Activated CD8-positive, alpha-beta T cell treated with anti-CD3 and anti-CD28 coated beads, Interleukin-2, amount 10 ng/mL, durations not matched to agents 7 days and 5 days (primary cell): ENCODE measurements at regions of chr15 and their contacts with region 1.

Region 1: DNA sequence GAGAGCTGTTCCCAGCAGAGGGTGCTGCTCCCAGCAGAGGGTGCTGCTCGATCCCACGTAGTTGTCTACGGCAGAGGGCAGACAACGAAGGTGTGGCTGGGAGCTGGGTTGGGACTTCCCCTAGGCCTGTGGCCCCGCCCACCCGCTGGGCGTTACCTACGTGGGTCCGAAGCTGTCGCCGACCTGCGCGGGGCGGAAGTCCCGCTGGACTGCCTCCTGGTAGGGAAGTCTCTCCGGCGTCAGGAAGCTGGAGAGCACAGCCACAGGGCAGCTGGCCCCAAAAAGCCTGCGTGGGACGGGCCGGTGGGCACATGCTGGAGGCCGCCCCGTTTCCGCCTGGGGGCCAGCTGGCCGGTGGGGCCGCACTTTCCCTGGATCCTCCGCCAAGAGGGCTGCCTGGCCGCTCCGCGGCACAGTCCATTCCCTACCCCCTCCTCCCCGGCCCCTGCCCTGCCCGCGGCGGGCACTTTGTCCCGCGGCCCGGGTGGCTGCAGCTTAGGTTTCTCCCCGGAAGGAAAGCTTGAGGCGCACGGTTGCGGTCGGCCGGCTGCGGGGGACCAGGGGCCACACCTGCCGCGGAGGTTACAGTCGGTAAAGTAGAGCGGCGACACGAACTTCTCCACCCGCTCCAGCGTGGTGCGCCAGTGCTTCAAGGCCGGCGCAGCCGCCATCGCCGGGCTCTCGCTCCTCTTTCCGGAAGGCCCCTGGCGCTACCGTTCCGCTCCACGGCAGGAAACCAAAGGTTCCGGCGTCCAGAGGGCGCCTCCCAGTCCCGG is at the start of gene MAN2C1:
- DNase-seq: peak; percentile 94
- ATAC-seq: peak; percentile 94
- H3K4me3 Mint-ChIP-seq: peak within 1 kb of the TSS; percentile 89
- H3K27ac Mint-ChIP-seq: peak within 1 kb of the TSS; percentile 94
- H3K4me1 Mint-ChIP-seq: peaks cover 29% of the 10 kb centered on the region
- H3K27me3 Mint-ChIP-seq: no peaks in the 10 kb centered on the region
- total RNA-seq, gene MAN2C1: 123 to 131 TPM

Region 2: DNA sequence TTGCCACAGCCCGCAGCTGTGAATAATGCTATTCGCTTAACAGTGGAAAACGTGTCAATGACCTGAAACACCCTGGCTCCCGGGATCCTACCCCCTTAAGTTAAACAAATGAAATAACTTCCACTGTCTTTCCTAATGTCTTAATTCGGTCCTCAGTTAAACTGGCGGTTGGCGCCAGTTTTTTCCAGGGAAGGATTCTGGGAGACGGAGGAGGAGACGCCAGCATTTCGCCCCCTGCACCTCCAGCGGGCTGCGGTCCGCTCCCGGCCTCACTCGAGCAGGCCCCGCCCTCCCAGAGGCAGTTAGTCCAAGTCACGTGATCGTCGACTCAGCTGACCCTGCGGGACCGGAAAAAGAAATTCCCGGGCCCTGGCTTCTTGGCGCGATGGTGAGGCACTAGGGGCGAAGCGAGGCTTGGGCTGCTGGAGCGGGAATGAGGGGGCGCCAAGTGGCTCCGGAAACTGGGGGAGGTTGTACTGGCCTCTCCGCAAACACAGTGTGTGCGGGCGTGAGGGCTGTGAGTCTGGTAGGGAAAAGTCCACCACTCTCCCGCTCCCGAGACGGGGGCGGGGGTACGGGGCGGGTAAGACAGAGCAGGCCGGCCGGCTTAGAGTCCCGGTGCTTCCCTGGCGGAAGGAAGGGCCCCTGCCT is 32.3 kb before region 1 on chr15 and contains the start of gene COMMD4:
- CTCF ChIA-PET with region 1: interaction called, 4 read pairs
- POLR2A ChIA-PET with region 1: interaction called, 12 read pairs
- DNase-seq: peak; percentile 91
- ATAC-seq: peak; percentile 89
- H3K4me3 Mint-ChIP-seq: peak within 1 kb of the TSS; percentile 96
- H3K27ac Mint-ChIP-seq: peak within 1 kb of the TSS; percentile 94
- H3K4me1 Mint-ChIP-seq: peaks cover 16% of the 10 kb centered on the region
- H3K27me3 Mint-ChIP-seq: peaks cover 3% of the 10 kb centered on the region
- total RNA-seq, gene COMMD4: 101 to 103 TPM

Region 3: DNA sequence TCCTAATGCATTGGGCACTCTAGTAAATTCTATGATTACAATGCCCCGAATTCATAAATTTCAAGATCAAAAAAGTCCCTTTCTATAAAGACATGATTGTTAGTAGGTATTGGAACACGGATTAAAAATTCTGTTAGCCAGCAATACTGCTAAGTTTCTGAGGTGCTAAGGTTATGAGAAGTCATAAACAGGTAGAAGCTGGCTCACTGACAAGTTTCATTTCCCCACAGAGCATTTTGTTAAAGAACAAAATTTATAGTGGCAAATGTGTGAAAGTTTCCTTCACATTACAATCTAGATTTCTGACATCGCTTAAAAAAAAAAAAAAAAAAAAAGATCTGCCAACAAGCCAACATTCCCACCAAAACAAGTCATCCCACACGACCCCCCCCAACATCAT is 12.7 kb after region 1 on chr15:
- CTCF ChIA-PET with region 1: interaction called, 13 read pairs
- POLR2A ChIA-PET with region 1: interaction called, 4 read pairs
- DNase-seq: no peak
- ATAC-seq: no peak
- H3K4me3 Mint-ChIP-seq: no peak overlapping the region
- H3K27ac Mint-ChIP-seq: no peak overlapping the region
- H3K4me1 Mint-ChIP-seq: no peaks in the 10 kb centered on the region
- H3K27me3 Mint-ChIP-seq: no peaks in the 10 kb centered on the region

Region 4: GRCh38 chr15:75625542-75626347 is 257.6 kb after region 1 on chr15 and contains the start of gene SNUPN:
- CTCF ChIA-PET with region 1: interaction called, 7 read pairs
- POLR2A ChIA-PET with region 1: interaction called, 16 read pairs
- DNase-seq: peak; percentile 97
- ATAC-seq: peak; percentile 89
- H3K4me3 Mint-ChIP-seq: peak within 1 kb of the TSS; percentile 97
- H3K27ac Mint-ChIP-seq: peak within 1 kb of the TSS; percentile 99
- H3K4me1 Mint-ChIP-seq: peaks cover 44% of the 10 kb centered on the region
- H3K27me3 Mint-ChIP-seq: no peaks in the 10 kb centered on the region
- total RNA-seq, gene SNUPN: 31.4 to 32.5 TPM

Region 5: DNA sequence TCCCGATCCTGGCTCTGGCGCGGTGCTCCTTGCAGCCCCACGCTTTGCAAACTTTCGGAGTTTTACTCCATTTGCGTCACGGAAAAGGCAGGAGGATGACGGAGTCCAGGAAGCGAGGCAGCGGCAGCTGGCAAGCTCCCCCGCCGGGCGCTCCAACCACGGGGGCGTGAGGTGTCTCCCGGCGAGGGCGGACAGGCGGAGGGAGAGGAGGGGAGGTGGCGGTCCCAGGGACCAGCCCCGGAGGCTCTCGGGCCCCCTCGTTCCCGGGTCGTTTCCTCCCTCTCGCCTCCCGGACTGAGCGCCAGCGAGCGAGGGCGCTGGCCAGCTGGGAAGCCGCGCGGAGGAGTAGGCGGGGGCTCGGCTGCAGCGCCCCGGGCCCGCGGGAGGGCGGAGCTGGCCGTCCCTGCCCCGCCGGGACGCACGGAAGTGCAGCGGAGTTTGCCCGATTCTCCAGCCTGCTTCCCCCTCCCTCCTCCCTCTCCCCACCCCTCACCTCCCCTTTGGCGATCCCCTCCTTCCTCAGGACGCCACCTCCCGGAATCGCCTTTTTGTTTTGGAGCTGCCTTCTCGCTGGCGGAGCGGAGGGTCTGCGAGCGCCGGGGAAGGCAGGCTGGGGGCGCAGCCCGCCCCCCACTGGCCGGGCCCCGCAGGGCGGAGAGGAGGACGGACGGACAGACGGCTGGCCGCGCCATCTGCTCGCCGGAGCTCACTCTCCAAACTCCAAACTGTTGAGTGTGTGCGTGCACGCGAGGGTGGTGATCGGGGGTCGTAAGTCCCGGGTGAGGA is 279.5 kb after region 1 on chr15 and contains the start of gene SNX33:
- CTCF ChIA-PET with region 1: interaction called, 57 read pairs
- POLR2A ChIA-PET with region 1: interaction called, 7 read pairs
- DNase-seq: peak; percentile 63
- ATAC-seq: peak; percentile 77
- H3K4me3 Mint-ChIP-seq: peak within 1 kb of the TSS; percentile 78
- H3K27ac Mint-ChIP-seq: peak within 1 kb of the TSS; percentile 68
- H3K4me1 Mint-ChIP-seq: peaks cover 29% of the 10 kb centered on the region
- H3K27me3 Mint-ChIP-seq: peaks cover 17% of the 10 kb centered on the region
- total RNA-seq, gene SNX33: 0.55 to 0.70 TPM